ENCODE measurements at regions of chr1 and their contacts with region 1.

Region 1: DNA sequence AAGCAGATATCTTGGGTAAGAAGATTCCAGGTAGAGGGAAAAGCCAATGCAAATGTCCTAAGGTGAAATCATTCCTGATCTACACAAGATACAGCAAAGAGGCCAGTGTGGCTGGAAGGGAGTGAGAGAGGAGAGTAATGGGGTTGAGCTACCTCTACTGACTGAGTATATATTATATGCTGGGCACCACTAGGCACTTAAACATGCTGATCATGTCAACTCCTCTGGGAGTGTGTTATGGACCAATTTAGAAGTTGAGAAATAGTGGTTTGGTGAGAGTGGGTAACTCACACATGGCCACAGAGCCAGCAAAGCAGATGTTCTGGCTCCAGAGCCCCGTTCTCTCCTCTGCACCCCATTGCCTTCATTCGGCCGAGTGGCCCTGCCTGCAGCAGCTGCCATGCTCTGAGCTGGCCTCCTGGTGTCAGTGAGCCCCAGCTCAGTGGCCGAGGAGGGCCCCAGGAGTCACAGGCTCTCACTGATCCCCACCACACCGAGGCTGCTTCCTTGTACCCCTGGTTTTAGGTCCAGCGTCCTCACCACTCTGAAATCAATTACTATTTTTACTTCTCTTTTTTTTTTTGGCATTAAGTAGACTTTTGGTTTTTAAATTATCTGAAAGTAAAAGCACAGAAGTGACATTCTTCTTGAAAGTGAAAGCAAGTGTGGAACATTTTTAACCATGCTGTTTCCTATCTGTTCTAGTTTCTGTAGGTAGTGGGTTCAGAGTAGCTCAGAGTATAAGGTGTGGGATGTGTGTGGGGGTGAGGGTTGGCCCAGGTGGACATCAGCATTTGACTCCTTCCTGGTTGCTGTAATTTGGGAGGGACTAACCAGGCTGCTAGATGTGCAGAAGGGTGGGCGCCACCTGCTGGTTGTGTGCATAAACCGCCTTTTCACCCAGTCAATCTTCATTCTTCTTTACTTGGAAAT is 45.8 kb upstream of the CRNN start:
- DNase-seq: peak; percentile 83
- H3K4me3 Mint-ChIP-seq: peak overlapping the region; percentile 52
- H3K27ac Mint-ChIP-seq: peak overlapping the region; percentile 31
- H3K4me1 Mint-ChIP-seq: peaks cover 22% of the 10 kb centered on the region
- H3K27me3 Mint-ChIP-seq: no peaks in the 10 kb centered on the region

Region 2: DNA sequence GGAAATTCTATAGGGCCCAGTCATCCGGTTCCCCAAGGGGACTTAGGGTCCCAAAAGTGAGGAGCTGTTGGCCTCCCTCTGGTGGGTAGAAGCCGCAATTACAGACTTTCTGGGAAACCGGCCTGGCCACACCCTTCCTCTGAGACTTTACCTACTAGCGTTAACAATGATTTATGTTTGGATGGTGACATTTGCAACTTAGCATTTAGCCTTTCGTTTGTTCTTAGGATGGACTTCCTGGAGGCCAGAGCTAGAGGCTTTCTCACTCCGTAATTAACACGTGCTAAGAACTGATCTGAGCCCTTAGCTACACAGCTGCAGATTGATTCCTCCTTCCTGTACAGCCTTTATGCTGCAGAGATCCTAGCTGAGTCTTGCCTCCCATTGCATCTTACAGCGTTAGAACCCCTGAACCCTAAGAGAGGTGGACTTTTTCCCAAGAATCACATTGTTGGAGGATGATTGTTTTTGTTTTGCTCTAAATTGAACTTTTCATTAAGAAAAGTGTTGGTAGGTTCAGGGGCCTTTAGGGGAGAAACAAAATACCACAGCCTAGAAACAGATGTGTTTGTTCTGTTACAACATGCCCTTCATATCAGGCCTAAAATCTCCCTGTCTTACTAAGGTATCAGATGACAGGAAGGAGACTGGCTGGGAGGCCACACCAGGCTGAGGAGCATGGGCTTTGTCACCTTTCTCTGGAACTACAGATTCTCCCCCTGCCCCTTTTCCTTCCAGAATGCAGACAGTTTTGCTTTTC is 425.0 kb before region 1 on chr1:
- CTCF ChIA-PET with region 1: interaction called, 19 read pairs
- POLR2A ChIA-PET with region 1: no interaction called
- intact Hi-C with region 1: no loop called
- DNase-seq: peak; percentile 83
- H3K4me3 Mint-ChIP-seq: peak overlapping the region; percentile 83
- H3K27ac Mint-ChIP-seq: peak overlapping the region; percentile 100
- H3K4me1 Mint-ChIP-seq: peaks cover 43% of the 10 kb centered on the region
- H3K27me3 Mint-ChIP-seq: no peaks in the 10 kb centered on the region

Region 3: DNA sequence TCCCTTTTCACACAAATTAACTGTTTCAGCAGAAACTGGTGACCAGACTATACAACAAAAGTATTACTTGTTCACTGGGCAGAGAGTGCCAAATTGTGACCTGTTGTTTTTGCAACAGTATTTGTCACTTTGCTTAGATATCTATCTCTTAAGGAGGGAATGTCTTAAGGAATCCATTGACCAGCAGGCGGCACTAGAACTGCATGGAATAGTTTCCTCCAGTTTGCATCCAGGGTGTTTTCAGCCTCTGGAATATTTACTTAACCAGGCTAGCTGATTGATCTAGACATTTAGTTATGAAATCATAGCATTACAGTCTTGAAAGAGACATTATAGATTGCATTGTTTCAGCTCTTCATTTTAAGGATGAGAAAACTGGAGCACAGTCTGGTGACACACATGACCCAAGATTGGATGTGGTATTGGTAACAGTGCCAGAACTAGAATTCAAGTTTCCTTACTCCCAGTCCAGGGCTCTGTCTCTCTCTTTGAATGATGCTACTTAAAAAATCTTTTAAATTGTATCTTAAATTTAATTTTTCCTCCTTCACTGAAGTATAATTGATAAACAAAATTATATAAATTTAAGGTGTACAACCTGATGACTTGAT is 317.8 kb before region 1 on chr1:
- CTCF ChIA-PET with region 1: interaction called, 8 read pairs
- POLR2A ChIA-PET with region 1: no interaction called
- intact Hi-C with region 1: loop called (anchors 2 kb)
- DNase-seq: peak; percentile 41
- H3K4me3 Mint-ChIP-seq: no peak overlapping the region
- H3K27ac Mint-ChIP-seq: no peak overlapping the region
- H3K4me1 Mint-ChIP-seq: peaks cover 5% of the 10 kb centered on the region
- H3K27me3 Mint-ChIP-seq: peaks cover 41% of the 10 kb centered on the region

Region 4: GRCh38 chr1:152356736-152357135 is 103.1 kb before region 1 on chr1:
- CTCF ChIA-PET with region 1: interaction called, 10 read pairs
- POLR2A ChIA-PET with region 1: no interaction called
- intact Hi-C with region 1: no loop called
- DNase-seq: no peak
- H3K4me3 Mint-ChIP-seq: no peak overlapping the region
- H3K27ac Mint-ChIP-seq: no peak overlapping the region
- H3K4me1 Mint-ChIP-seq: no peaks in the 10 kb centered on the region
- H3K27me3 Mint-ChIP-seq: no peaks in the 10 kb centered on the region

Region 5: DNA sequence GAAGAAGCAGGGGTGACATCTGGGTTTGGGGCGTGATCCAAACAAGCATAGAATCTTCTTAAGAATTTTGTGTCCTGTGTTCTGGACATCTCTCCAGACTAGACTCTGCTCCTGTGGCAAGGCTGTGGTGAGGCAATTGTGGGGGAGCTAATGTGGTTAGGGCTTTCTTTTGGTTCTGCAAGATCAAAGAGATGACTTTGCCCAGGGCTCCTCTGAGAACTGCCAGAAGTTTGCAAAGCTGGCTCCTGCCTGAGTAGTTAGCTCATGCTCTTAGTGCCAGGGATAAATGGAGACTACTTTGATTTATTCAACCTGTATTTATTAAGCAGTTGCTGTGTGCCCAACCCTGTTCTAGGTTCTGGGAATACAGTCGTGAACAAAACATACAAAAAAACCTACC is 11.8 kb before region 1 on chr1:
- CTCF ChIA-PET with region 1: interaction called, 65 read pairs
- POLR2A ChIA-PET with region 1: no interaction called
- intact Hi-C with region 1: no loop called
- DNase-seq: no peak
- H3K4me3 Mint-ChIP-seq: no peak overlapping the region
- H3K27ac Mint-ChIP-seq: no peak overlapping the region
- H3K4me1 Mint-ChIP-seq: no peaks in the 10 kb centered on the region
- H3K27me3 Mint-ChIP-seq: no peaks in the 10 kb centered on the region

Region 6: DNA sequence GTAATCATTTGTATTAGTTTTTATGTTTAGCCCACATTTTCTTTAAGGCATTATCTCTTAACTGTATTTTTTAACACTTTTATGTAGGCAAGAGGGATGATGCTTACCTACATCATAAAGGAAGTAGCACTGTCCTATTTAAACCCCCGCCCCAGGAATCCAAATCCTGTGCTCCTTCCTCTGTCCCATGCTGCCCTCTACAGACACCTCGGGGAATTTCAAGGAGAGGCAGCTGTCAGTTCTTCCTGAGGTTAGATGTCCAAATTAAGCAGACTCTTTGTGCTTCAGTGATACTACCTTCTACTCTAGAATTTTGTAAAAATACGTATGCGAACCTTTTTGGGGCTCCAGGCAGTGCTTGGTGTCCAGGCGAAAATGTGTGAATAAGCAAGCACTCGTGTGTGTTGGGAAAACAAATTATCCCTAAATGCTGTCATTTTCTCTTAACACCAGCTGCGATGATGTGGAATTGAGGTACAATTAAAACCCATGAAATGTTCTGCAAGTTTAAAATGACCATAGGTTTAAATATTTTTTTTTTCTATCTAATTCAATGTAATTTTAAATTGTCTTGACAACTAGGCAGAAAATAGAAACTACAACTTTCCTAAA is 73.6 kb after region 1 on chr1:
- CTCF ChIA-PET with region 1: no interaction called
- POLR2A ChIA-PET with region 1: no interaction called
- intact Hi-C with region 1: loop called (anchors 10 kb)
- DNase-seq: peak; percentile 57
- H3K4me3 Mint-ChIP-seq: no peak overlapping the region
- H3K27ac Mint-ChIP-seq: no peak overlapping the region
- H3K4me1 Mint-ChIP-seq: no peaks in the 10 kb centered on the region
- H3K27me3 Mint-ChIP-seq: peaks cover 27% of the 10 kb centered on the region

Measured in activated CD4-positive, alpha-beta memory T cell treated with anti-CD3 and anti-CD28 coated beads for 36 hours (primary cell).